ENCODE measurements at regions of chr16 and their contacts with region 1.

Region 1: GRCh38 chr16:89972244-89973234 is 24.0 kb downstream of the DEF8 start:
- DNase-seq: peak; percentile 97
- H3K4me3 ChIP-seq: peak overlapping the region; percentile 100
- H3K27ac ChIP-seq: peak overlapping the region; percentile 96
- H3K4me1 ChIP-seq: peaks cover 18% of the 10 kb centered on the region
- H3K27me3 ChIP-seq: no peaks in the 10 kb centered on the region
- CTCF ChIP-seq: no peak

Region 2: GRCh38 chr16:88315543-88316105 is 1656.9 kb before region 1 on chr16:
- CTCF ChIA-PET with region 1: no interaction called
- POLR2A ChIA-PET with region 1: no interaction called
- intact Hi-C with region 1: no loop called
- DNase-seq: no peak
- H3K4me3 ChIP-seq: no peak overlapping the region
- H3K27ac ChIP-seq: no peak overlapping the region
- H3K4me1 ChIP-seq: no peaks in the 10 kb centered on the region
- H3K27me3 ChIP-seq: no peaks in the 10 kb centered on the region
- CTCF ChIP-seq: no peak

Region 3: DNA sequence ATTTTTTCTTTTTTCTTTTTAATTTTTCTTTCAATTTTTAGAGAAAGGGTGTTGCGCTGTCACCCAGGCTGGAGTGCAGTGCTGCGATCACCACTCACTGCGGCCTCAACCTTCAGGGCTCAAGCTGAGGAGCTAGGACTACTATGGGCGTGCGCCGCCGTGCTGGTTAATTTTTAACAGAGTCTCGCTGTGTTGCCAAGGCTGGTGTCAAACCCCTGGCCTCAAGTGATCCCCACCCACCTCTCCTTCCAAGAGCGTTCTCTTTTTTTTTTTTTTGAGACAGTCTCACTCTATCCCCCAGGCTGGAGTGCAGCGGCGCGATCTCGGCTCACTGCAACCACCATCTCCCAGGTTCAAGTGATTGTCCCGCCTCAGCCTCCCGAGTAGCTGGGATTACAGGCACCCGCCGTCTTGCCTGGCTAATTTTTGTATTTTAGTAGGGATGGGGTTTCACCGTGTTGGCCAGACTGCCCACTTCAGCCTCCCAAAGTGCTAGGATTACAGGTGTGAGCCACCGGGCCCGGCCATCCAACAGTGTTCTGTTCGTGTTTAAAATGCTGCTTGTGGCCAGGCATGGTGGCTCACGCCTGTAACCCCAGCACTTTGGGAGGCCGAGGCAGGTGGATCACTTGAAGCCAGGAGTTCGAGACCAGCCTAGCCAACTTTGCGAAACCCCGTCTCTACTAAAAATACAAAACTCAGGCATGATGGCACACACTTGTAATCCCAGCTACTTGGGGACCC is 426.5 kb before region 1 on chr16:
- CTCF ChIA-PET with region 1: no interaction called
- POLR2A ChIA-PET with region 1: no interaction called
- intact Hi-C with region 1: no loop called
- DNase-seq: no peak
- H3K4me3 ChIP-seq: no peak overlapping the region
- H3K27ac ChIP-seq: no peak overlapping the region
- H3K4me1 ChIP-seq: no peaks in the 10 kb centered on the region
- H3K27me3 ChIP-seq: no peaks in the 10 kb centered on the region
- CTCF ChIP-seq: no peak

Region 4: DNA sequence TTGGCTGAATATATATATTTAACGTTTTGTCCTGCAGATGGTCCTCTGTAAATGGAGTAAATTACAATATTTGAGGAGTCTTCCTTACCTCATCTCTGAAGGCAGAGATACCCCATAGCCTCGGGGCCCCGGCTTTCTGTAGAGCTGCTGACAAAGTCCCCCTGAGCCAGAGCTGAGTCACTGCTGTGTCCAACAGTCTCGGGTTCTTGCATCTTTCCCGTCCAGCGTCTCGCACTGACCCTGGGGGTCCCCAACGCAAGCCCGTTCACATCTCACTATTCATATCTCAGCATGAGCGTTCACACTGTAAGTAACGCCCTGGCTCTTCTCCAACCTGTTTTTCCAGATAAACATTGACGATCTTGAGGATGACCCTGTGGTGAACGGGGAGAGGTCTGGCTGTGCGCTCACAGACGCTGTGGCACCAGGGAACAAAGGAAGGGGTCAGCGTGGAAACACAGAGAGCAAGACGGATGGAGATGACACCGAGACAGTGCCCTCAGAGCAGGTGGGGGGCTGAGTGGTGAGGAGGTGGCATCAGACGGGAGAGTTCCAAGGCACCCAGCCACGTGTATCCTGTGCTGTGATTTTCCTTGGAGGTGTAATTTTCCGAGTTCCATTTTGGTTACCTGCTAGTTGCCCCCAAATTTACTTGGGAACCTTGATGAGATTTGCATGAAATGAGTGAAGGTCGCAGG is 89.4 kb before region 1 on chr16:
- CTCF ChIA-PET with region 1: no interaction called
- POLR2A ChIA-PET with region 1: interaction called, 17 read pairs
- intact Hi-C with region 1: no loop called
- DNase-seq: no peak
- H3K4me3 ChIP-seq: no peak overlapping the region
- H3K27ac ChIP-seq: no peak overlapping the region
- H3K4me1 ChIP-seq: no peaks in the 10 kb centered on the region
- H3K27me3 ChIP-seq: no peaks in the 10 kb centered on the region
- CTCF ChIP-seq: no peak